ENCODE measurements at regions of chr3 and their contacts with region 1.

Region 1: GRCh38 chr3:84974347-84974746 is 15.6 kb downstream of the CADM2 start:
- DNase-seq: no peak
- ATAC-seq: peak in 1 of 2 donors; percentile 61

Region 2: DNA sequence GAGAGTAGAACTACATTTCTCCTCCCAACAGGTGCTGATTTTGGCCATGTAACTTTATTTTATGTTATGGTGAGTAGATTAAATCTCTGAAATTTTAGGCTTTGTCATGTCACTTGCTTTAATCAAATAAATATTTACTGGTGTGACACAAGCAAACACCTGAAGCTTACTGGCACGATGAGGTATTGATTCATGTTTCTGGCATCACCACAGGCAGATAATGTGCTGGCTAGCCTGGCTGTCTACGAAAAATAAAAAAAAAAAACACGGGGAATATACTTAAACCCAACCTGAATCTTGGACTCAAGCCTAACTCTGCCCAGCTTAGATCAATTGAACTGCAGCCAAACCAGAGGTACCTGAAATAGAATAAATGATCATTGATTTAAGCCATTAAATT is 81.1 kb before region 1 on chr3:
- intact Hi-C with region 1: no loop called
- DNase-seq: no peak
- ATAC-seq: no peak

Region 3: DNA sequence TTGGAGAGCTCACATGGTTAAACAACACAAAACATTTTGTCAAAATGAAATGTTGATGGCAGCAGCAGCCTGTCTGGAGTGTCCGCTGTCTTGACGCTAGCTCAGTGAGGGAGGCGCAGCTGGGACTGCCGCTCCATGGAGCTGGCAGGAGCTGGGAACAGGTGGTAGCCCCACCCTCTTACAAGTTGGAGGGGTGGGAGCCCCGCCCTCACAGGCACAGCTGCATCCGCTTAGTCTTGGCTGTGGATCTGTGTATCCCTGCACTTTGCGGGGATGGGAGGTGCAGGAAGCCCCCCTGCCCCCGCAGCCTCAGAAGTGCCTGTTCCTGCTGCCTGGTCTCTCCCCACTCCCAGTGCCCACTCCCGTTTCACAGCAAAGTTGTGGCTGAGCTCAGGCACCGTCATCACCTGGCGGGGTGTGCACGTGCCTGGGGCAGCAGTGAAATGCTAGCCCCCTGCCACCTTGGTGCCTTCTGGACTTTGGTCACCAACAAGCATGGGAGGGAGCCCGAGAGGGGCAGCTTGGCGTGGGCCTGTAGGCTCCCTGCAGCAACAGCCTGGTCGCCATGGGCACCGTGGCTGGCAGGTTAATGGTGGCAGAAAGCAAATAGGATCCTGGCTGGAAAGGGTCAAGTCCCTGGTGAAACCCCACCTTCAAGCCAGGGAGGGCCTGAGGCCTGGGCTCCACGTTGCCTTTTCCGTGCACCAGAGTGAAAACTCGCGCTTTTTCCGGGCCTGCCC is 69.4 kb before region 1 on chr3:
- intact Hi-C with region 1: no loop called
- DNase-seq: no peak
- ATAC-seq: no peak

Region 4: GRCh38 chr3:85342915-85343314 is 368.6 kb after region 1 on chr3:
- intact Hi-C with region 1: loop called in 1 of 2 experiments (anchors 2 kb)
- DNase-seq: no peak
- ATAC-seq: no peak

Region 5: GRCh38 chr3:85576091-85576690 is 601.8 kb after region 1 on chr3:
- intact Hi-C with region 1: loop called in 1 of 2 experiments (anchors 10 kb)
- DNase-seq: peak; percentile 44
- ATAC-seq: no peak